Heart left ventricle (tissue), 16 donors: ENCODE measurements at regions of chr2 and their contacts with region 1.

Region 1: GRCh38 chr2:219459460-219460311 is 25.0 kb downstream of the SPEG start:
- DNase-seq: peak; percentile 68 to 82 (median 78)
- ATAC-seq: peak; percentile 49 to 69 (median 64)
- H3K4me3 ChIP-seq: peak overlapping the region in 1 of 12 donors; percentile 17
- H3K27ac ChIP-seq: peak overlapping the region; percentile 66 to 99 (median 92)
- H3K4me1 ChIP-seq: peaks cover 0 to 68% (median 12%) of the 10 kb centered on the region in 12 donors
- H3K27me3 ChIP-seq: peaks cover 0 to 9% (median 0%) of the 10 kb centered on the region in 9 donors
- CTCF ChIP-seq: peak; percentile 77 to 90 (median 86)
- POLR2A ChIP-seq: no peak

Region 2: GRCh38 chr2:219498280-219499057 is 38.8 kb after region 1 on chr2 and contains the start of gene GMPPA:
- intact Hi-C with region 1: loop called in 1 of 10 experiments (anchors 1 kb)
- DNase-seq: peak; percentile 96 to 98 (median 96)
- ATAC-seq: peak; percentile 86 to 94 (median 88)
- H3K4me3 ChIP-seq: peak within 1 kb of the TSS; percentile 38 to 89 (median 78)
- H3K27ac ChIP-seq: peak within 1 kb of the TSS; percentile 94 to 100 (median 98)
- H3K4me1 ChIP-seq: peaks cover 0 to 50% (median 35%) of the 10 kb centered on the region in 12 donors
- H3K27me3 ChIP-seq: peaks cover 0 to 37% (median 0%) of the 10 kb centered on the region in 9 donors
- CTCF ChIP-seq: peak in 1 of 12 donors; percentile 31
- POLR2A ChIP-seq: peak in 1 of 2 donors; percentile 61
- total RNA-seq, gene GMPPA: 15.8 to 31.6 (median 20.1) TPM

Region 3: DNA sequence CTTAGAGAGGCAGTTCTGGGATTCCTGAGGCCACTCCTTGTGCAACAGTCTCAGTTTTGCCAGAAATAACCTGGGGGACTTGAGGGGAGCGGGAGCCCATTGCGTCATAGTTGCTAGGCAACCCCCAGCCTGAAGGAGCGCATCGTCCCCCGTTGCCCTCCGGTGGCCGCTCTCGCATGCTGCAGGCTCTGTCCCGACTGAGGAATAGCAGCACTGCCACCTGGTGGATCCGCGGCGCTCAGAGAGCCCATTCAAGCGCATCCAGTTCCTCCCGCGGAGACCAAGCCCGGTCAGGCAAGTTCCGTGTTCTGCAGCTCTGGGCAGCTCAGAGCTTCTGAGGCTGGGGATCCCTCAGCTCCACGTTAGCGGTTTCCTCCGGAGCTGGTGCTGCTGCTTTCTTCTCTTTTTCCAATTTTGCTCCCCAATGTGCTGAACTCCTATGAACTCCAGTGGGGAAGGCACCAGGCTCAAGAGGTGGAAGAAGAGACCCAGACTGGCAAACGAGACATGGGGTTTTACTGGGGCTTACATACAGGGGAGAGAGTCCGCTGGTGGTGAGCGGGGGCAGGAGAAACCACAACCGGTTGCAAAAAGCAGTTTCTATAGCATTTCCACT is 182.9 kb after region 1 on chr2:
- intact Hi-C with region 1: no loop called
- DNase-seq: peak; percentile 93 to 98 (median 97)
- ATAC-seq: peak; percentile 28 to 63 (median 54)
- H3K4me3 ChIP-seq: no peak overlapping the region
- H3K27ac ChIP-seq: peak overlapping the region; percentile 32 to 99 (median 86)
- H3K4me1 ChIP-seq: peaks cover 0 to 76% (median 38%) of the 10 kb centered on the region in 12 donors
- H3K27me3 ChIP-seq: no peaks in the 10 kb centered on the region
- CTCF ChIP-seq: peak; percentile 90 to 99 (median 98)
- POLR2A ChIP-seq: peak in 1 of 2 donors; percentile 42